Natural killer cell (primary cell): ENCODE measurements at regions of chr2 and their contacts with region 1.

Region 1: DNA sequence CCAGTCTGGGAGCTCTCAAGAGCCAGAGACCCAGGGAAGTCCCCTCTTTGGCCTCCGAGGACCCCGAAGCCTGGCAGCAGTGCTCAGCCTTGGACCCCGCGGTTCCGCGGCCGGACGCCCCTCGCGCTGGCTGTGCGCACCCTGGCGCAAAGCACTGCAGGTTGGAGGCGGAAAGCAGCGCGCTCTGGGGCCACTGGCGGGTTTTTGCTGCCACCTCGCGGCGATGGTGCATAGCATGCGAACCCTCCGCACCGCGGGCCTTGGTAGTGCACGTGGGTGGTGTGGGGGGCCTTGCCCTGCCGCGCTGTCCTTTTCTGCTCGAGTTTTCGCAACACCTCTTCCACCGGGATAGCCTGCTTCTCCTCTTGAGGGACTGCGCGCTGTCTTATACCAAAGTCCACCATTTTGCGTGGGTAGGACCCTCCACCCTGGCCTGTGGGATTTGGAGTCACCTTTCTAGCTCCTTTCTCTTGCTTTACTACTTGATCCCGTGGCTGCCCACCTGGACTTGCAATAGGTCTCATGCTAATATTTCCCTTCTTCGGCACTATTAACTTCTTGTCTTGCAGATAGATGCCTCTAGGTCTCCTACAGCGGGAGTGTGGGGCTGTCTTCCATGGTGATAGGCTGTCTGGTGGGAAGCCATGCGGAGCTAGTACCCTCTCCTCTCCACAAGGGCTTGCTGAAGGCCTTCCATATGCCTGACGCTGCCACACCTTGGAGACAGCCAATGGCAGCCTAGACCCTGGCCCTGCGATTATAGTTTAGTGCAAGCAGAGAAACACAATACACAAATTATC is 14.3 kb downstream of the SIX3 start:
- DNase-seq: peak; percentile 56 to 78
- ATAC-seq: peak; percentile 64 to 91 (median 74)
- H3K4me3 ChIP-seq: no peak overlapping the region
- H3K4me3 Mint-ChIP-seq: no peak overlapping the region
- H3K27ac ChIP-seq: no peak overlapping the region
- H3K27ac Mint-ChIP-seq: no peak overlapping the region
- H3K4me1 ChIP-seq: peaks cover 11% of the 10 kb centered on the region
- H3K4me1 Mint-ChIP-seq: peaks cover 5 to 10% of the 10 kb centered on the region in 2 donors
- H3K27me3 ChIP-seq: peaks cover 21% of the 10 kb centered on the region
- H3K27me3 Mint-ChIP-seq: peaks cover 57 to 66% of the 10 kb centered on the region in 2 donors
- CTCF ChIP-seq: peak; percentile 61

Region 2: GRCh38 chr2:44479122-44479887 is 476.5 kb before region 1 on chr2:
- intact Hi-C with region 1: loop called (anchors 1 kb)
- DNase-seq: peak in 1 of 2 donors; percentile 83
- ATAC-seq: peak; percentile 99 to 100 (median 100)
- H3K4me3 ChIP-seq: no peak overlapping the region
- H3K4me3 Mint-ChIP-seq: no peak overlapping the region
- H3K27ac ChIP-seq: no peak overlapping the region
- H3K27ac Mint-ChIP-seq: no peak overlapping the region
- H3K4me1 ChIP-seq: no peaks in the 10 kb centered on the region
- H3K4me1 Mint-ChIP-seq: peaks cover 0 to 4% of the 10 kb centered on the region in 2 donors
- H3K27me3 ChIP-seq: no peaks in the 10 kb centered on the region
- H3K27me3 Mint-ChIP-seq: no peaks in the 10 kb centered on the region
- CTCF ChIP-seq: peak; percentile 100

Region 3: DNA sequence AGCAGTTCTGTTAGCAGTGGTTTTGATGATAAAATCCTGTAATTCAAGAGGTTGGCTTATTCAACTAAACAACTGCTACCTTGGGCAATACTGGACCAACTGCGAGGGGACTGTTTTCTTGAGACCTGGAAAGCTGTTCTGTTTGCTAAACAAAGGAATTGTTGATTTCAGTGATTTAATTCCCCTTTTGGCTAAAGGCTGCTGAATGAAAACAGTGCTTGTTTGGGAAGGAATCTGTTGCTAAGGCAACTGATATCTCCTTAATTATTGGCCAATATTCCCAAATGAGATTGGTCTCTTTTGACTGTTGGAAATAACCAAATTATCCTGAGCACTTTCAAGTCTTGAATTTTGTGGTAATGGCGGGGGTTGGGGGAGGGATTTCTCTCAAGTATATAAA is 457.2 kb before region 1 on chr2:
- intact Hi-C with region 1: no loop called
- DNase-seq: no peak
- ATAC-seq: no peak
- H3K4me3 ChIP-seq: no peak overlapping the region
- H3K4me3 Mint-ChIP-seq: no peak overlapping the region
- H3K27ac ChIP-seq: no peak overlapping the region
- H3K27ac Mint-ChIP-seq: no peak overlapping the region
- H3K4me1 ChIP-seq: no peaks in the 10 kb centered on the region
- H3K4me1 Mint-ChIP-seq: no peaks in the 10 kb centered on the region
- H3K27me3 ChIP-seq: no peaks in the 10 kb centered on the region
- H3K27me3 Mint-ChIP-seq: peaks cover 0 to 14% of the 10 kb centered on the region in 2 donors
- CTCF ChIP-seq: no peak

Region 4: GRCh38 chr2:44817673-44818335 is 138.0 kb before region 1 on chr2:
- intact Hi-C with region 1: no loop called
- DNase-seq: no peak
- ATAC-seq: no peak
- H3K4me3 ChIP-seq: no peak overlapping the region
- H3K4me3 Mint-ChIP-seq: no peak overlapping the region
- H3K27ac ChIP-seq: no peak overlapping the region
- H3K27ac Mint-ChIP-seq: no peak overlapping the region
- H3K4me1 ChIP-seq: no peaks in the 10 kb centered on the region
- H3K4me1 Mint-ChIP-seq: no peaks in the 10 kb centered on the region
- H3K27me3 ChIP-seq: no peaks in the 10 kb centered on the region
- H3K27me3 Mint-ChIP-seq: peaks cover 22 to 39% of the 10 kb centered on the region in 2 donors
- CTCF ChIP-seq: no peak